Heart right ventricle (tissue), 16 donors: ENCODE measurements at regions of chr5 and their contacts with region 1.

Region 1: DNA sequence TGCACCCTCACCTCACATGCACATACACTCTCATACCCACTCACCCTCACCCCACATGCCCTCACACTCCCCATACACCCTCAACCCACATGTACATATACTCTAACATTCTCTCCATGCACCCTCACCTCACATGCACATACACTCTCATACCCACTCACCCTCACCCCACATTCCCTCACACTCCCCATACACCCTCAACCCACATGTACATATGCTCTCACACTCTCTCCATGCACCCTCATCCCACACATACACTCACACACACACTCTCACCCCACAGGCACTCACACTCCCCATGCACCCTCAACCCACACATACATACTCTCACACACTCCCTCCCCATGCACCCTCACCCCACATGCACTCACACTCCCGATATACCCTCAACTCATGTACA is 550.2 kb upstream of the DAP start:
- DNase-seq: no peak
- ATAC-seq: peak in 2 of 8 donors; percentile 24 to 53
- H3K4me3 ChIP-seq: no peak overlapping the region
- H3K27ac ChIP-seq: no peak overlapping the region
- H3K4me1 ChIP-seq: peaks cover 0 to 6% (median 0%) of the 10 kb centered on the region in 9 donors
- H3K27me3 ChIP-seq: no peaks in the 10 kb centered on the region
- CTCF ChIP-seq: no peak

Region 2: DNA sequence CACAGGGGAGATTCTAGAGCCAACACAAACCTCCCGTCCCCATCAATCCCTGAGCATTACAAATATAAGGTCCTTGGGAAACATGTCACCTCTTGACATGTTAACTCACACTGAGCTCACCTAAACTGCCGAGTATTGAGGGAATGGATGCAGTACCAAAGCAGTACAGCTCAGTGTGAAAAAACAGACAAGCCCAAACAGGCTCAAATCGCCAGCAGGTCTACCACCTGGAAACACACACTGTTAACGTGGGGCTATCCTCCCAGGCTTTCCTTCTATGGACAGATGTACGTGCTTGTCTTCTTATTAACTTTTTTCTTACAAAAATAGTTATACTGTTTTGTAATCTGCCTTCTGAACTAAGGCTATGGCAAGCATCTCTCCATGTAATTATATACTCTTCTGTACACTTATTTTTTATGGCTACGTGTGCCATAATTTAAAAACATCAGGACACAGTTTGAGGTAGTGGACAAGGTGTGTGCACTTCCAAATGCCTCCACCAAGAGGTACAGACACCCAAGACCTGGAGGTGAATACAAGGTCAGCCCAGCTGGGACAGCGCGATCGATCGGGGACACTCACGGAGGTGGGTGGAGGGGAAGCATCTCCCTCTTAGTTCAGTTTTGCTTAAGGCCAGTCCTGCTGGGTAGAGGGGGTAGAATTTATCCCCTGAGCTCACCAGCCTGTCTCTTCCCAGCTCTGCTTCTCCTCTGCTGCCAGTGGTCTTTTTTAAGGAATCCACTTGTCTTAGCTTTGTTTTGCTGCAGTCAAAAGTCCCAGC is 626.8 kb before region 1 on chr5:
- intact Hi-C with region 1: loop called in 1 of 10 experiments (anchors 5 kb)
- DNase-seq: no peak
- ATAC-seq: no peak
- H3K4me3 ChIP-seq: no peak overlapping the region
- H3K27ac ChIP-seq: no peak overlapping the region
- H3K4me1 ChIP-seq: peaks cover 0 to 6% (median 0%) of the 10 kb centered on the region in 9 donors
- H3K27me3 ChIP-seq: no peaks in the 10 kb centered on the region
- CTCF ChIP-seq: no peak